HAP-1 (cell line): ENCODE measurements at regions of chr15 and their contacts with region 1.

Region 1: GRCh38 chr15:84600851-84601838 is at the start of gene ZSCAN2:
- DNase-seq: peak; percentile 100
- H3K4me3 ChIP-seq: peak within 1 kb of the TSS; percentile 92
- H3K4me1 ChIP-seq: peaks cover 8% of the 10 kb centered on the region
- H3K27me3 ChIP-seq: no peaks in the 10 kb centered on the region

Region 2: GRCh38 chr15:85044251-85044853 is 443.2 kb after region 1 on chr15:
- in situ Hi-C with region 1: loop called (anchors 10 kb)
- DNase-seq: peak; percentile 61 to 72
- H3K4me3 ChIP-seq: no peak overlapping the region
- H3K4me1 ChIP-seq: peaks cover 13% of the 10 kb centered on the region
- H3K27me3 ChIP-seq: no peaks in the 10 kb centered on the region

Region 3: GRCh38 chr15:85168642-85169173 is 567.6 kb after region 1 on chr15:
- in situ Hi-C with region 1: loop called (anchors 25 kb)
- DNase-seq: peak; percentile 58 to 87
- H3K4me3 ChIP-seq: peak overlapping the region; percentile 20
- H3K4me1 ChIP-seq: peaks cover 3% of the 10 kb centered on the region
- H3K27me3 ChIP-seq: peaks cover 12% of the 10 kb centered on the region